Naive thymus-derived CD4-positive, alpha-beta T cell (primary cell): ENCODE measurements at regions of chr10 and their contacts with region 1.

Region 1: GRCh38 chr10:26367771-26368170 is 70.4 kb upstream of the APBB1IP start:
- DNase-seq: peak in 6 of 9 donors; percentile 11 to 36 (median 30)
- ATAC-seq: peak; percentile 38
- H3K4me3 ChIP-seq: no peak overlapping the region
- H3K4me3 Mint-ChIP-seq: no peak overlapping the region
- H3K27ac ChIP-seq: no peak overlapping the region
- H3K27ac Mint-ChIP-seq: no peak overlapping the region
- H3K4me1 ChIP-seq: no peaks in the 10 kb centered on the region
- H3K4me1 Mint-ChIP-seq: peaks cover 0 to 4% (median 0%) of the 10 kb centered on the region in 7 donors
- H3K27me3 ChIP-seq: no peaks in the 10 kb centered on the region
- H3K27me3 Mint-ChIP-seq: peaks cover 0 to 19% (median 0%) of the 10 kb centered on the region in 5 donors

Region 2: GRCh38 chr10:26199841-26200240 is 167.9 kb before region 1 on chr10:
- CTCF ChIA-PET with region 1: no interaction called
- POLR2A ChIA-PET with region 1: no interaction called
- intact Hi-C with region 1: no loop called
- DNase-seq: no peak
- ATAC-seq: no peak
- H3K4me3 ChIP-seq: no peak overlapping the region
- H3K4me3 Mint-ChIP-seq: no peak overlapping the region
- H3K27ac ChIP-seq: no peak overlapping the region
- H3K27ac Mint-ChIP-seq: no peak overlapping the region
- H3K4me1 ChIP-seq: no peaks in the 10 kb centered on the region
- H3K4me1 Mint-ChIP-seq: peaks cover 0 to 16% (median 5%) of the 10 kb centered on the region in 7 donors
- H3K27me3 ChIP-seq: peaks cover 0 to 4% of the 10 kb centered on the region in 2 donors
- H3K27me3 Mint-ChIP-seq: peaks cover 5 to 22% (median 10%) of the 10 kb centered on the region in 5 donors

Region 3: DNA sequence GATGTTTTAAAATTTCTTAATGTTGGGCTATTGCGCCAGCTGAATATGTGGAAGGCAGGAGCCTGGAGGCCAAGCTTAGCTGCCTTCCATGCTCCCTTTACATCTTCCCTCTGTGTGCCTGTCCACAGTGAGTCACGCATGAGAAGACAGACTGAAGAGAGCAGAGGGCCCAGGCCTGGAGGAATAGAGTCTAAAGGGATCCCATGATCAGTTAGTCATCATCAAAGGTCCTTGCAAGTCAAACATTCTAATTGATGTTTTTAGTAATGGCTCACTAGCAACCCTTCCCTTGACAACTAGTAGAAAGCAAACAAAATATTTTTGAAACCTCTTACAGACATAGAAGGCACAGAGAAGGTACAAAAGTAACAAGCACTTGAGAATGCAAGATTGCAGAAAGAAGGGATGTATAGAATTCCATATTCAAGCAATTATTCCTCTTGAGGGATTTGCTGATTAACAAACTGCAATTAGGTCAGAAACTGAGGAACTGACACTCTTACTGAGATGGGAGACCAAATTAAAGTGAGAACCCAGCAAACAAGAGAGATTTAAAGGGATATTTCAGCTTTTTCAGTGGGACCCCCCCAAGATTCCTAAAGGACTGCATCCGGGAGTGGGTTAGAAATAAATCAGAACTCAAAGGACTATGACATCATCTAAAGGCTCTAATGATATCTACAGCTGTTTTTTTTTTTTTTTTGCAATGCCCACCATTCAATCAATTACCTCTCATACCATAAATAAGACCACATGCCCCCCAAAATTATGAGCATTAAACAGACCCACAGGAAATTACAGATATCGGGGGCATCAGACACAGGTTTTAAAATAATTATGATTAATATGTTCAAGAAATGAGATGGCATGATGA is 39.9 kb after region 1 on chr10:
- CTCF ChIA-PET with region 1: no interaction called
- POLR2A ChIA-PET with region 1: no interaction called
- intact Hi-C with region 1: loop called in 1 of 2 experiments (anchors 5 kb)
- DNase-seq: peak in 2 of 9 donors; percentile 2 to 7
- ATAC-seq: peak; percentile 84
- H3K4me3 ChIP-seq: no peak overlapping the region
- H3K4me3 Mint-ChIP-seq: no peak overlapping the region
- H3K27ac ChIP-seq: no peak overlapping the region
- H3K27ac Mint-ChIP-seq: peak overlapping the region in 1 of 9 donors; percentile 10
- H3K4me1 ChIP-seq: no peaks in the 10 kb centered on the region
- H3K4me1 Mint-ChIP-seq: peaks cover 0 to 7% (median 3%) of the 10 kb centered on the region in 7 donors
- H3K27me3 ChIP-seq: no peaks in the 10 kb centered on the region
- H3K27me3 Mint-ChIP-seq: peaks cover 0 to 20% (median 0%) of the 10 kb centered on the region in 5 donors

Region 4: GRCh38 chr10:27646224-27647175 is 1278.7 kb after region 1 on chr10:
- CTCF ChIA-PET with region 1: no interaction called
- POLR2A ChIA-PET with region 1: no interaction called
- intact Hi-C with region 1: no loop called
- DNase-seq: no peak
- ATAC-seq: no peak
- H3K4me3 ChIP-seq: no peak overlapping the region
- H3K4me3 Mint-ChIP-seq: peak overlapping the region in 1 of 10 donors; percentile 16
- H3K27ac ChIP-seq: no peak overlapping the region
- H3K27ac Mint-ChIP-seq: no peak overlapping the region
- H3K4me1 ChIP-seq: no peaks in the 10 kb centered on the region
- H3K4me1 Mint-ChIP-seq: no peaks in the 10 kb centered on the region
- H3K27me3 ChIP-seq: no peaks in the 10 kb centered on the region
- H3K27me3 Mint-ChIP-seq: peaks cover 17 to 45% (median 40%) of the 10 kb centered on the region in 5 donors